ENCODE measurements at regions of chrX and their contacts with region 1.

Region 1: GRCh38 chrX:109485470-109486340 is 3.8 kb upstream of the GUCY2F start:
- DNase-seq: peak; percentile 29
- H3K4me3 Mint-ChIP-seq: no peak overlapping the region
- H3K27ac Mint-ChIP-seq: no peak overlapping the region
- H3K4me1 Mint-ChIP-seq: no peaks in the 10 kb centered on the region
- H3K27me3 Mint-ChIP-seq: no peaks in the 10 kb centered on the region

Region 2: GRCh38 chrX:109511113-109511512 is 25.4 kb after region 1 on chrX:
- intact Hi-C with region 1: no loop called
- DNase-seq: no peak
- H3K4me3 Mint-ChIP-seq: no peak overlapping the region
- H3K27ac Mint-ChIP-seq: no peak overlapping the region
- H3K4me1 Mint-ChIP-seq: no peaks in the 10 kb centered on the region
- H3K27me3 Mint-ChIP-seq: peaks cover 16% of the 10 kb centered on the region

Region 3: DNA sequence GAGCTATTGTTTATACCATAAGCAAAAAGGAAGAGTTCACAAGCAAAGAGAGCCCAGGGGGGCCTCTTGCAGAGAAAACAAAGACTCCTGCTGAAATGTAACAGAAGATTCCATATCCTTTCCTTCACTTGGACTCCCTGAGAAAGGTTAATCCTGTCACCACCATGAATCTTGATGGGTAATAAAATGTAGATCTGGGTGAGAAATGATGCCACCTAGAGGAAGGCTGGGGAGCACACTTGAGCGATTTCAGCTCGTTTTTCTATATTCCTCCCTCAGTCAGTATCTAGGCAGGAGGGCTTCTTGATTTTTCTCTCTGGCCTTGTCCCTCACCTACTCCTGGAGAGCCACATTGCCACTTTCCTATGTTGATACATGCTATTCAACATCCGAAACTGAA is 149.5 kb after region 1 on chrX:
- intact Hi-C with region 1: loop called (anchors 1 kb)
- DNase-seq: no peak
- H3K4me3 Mint-ChIP-seq: no peak overlapping the region
- H3K27ac Mint-ChIP-seq: no peak overlapping the region
- H3K4me1 Mint-ChIP-seq: peaks cover 26% of the 10 kb centered on the region
- H3K27me3 Mint-ChIP-seq: no peaks in the 10 kb centered on the region

Region 4: GRCh38 chrX:109714340-109714958 is 228.7 kb after region 1 on chrX:
- intact Hi-C with region 1: loop called (anchors 5 kb)
- DNase-seq: no peak
- H3K4me3 Mint-ChIP-seq: no peak overlapping the region
- H3K27ac Mint-ChIP-seq: no peak overlapping the region
- H3K4me1 Mint-ChIP-seq: peaks cover 38% of the 10 kb centered on the region
- H3K27me3 Mint-ChIP-seq: no peaks in the 10 kb centered on the region

Region 5: DNA sequence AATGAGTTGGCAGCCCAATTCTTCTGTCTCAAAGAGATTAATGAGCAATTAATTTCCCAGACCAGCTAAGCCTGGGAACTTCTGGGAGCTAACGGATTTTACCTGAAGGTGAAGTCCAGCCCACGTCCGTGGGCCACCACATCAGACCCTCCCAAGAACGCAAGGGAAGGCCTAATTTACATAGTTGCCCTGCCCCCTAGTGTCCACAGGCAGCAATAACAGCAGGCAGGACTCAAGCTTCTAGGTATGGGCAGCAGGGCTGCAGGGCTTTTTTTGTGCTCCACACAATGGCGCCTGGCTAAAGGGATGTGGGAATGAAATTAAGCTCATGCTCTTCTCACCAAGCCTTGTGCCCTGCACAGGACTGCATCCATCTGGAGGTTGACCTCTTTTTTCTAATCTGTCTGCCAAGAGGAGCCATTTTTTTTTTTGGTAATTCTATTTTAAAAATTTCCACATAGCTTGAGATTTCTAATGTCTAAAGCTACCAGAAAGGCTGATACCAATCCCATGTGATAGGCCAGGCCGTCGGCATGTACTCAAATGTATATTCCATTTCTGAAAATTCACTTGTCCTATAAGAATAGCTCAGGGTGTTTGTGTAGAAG is 405.3 kb after region 1 on chrX:
- intact Hi-C with region 1: loop called (anchors 1 kb)
- DNase-seq: peak; percentile 4
- H3K4me3 Mint-ChIP-seq: no peak overlapping the region
- H3K27ac Mint-ChIP-seq: no peak overlapping the region
- H3K4me1 Mint-ChIP-seq: no peaks in the 10 kb centered on the region
- H3K27me3 Mint-ChIP-seq: no peaks in the 10 kb centered on the region

Region 6: GRCh38 chrX:110146521-110146920 is 660.8 kb after region 1 on chrX:
- intact Hi-C with region 1: loop called (anchors 10 kb)
- DNase-seq: no peak
- H3K4me3 Mint-ChIP-seq: no peak overlapping the region
- H3K27ac Mint-ChIP-seq: no peak overlapping the region
- H3K4me1 Mint-ChIP-seq: no peaks in the 10 kb centered on the region
- H3K27me3 Mint-ChIP-seq: no peaks in the 10 kb centered on the region

Region 7: DNA sequence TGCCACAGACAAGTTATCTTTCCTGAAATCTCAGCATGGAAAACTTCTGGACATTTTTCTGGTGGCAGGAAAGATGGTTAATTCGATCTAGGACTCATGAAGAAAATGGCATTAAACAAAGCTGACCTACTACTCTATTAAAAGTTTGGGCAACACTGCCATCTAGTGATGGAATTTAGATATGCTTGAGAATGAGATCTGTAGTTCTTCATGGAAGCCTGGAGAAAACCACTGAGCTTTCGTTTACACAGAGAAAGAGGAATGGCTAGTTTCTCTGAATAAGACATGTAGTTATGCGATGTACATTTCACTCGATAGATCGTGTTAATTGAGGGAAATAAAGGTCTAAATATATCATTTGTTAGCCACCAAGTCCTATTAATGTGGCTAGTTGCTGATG is 1361.6 kb after region 1 on chrX:
- intact Hi-C with region 1: no loop called
- DNase-seq: peak; percentile 0
- H3K4me3 Mint-ChIP-seq: no peak overlapping the region
- H3K27ac Mint-ChIP-seq: no peak overlapping the region
- H3K4me1 Mint-ChIP-seq: no peaks in the 10 kb centered on the region
- H3K27me3 Mint-ChIP-seq: no peaks in the 10 kb centered on the region